ENCODE measurements at regions of chr9 and their contacts with region 1.

Region 1: GRCh38 chr9:14616188-14616982 is 76.8 kb downstream of the ZDHHC21 start:
- DNase-seq: no peak
- H3K4me3 Mint-ChIP-seq: no peak overlapping the region
- H3K27ac Mint-ChIP-seq: no peak overlapping the region
- H3K4me1 Mint-ChIP-seq: no peaks in the 10 kb centered on the region
- H3K27me3 Mint-ChIP-seq: no peaks in the 10 kb centered on the region

Region 2: GRCh38 chr9:14661421-14662059 is 45.2 kb after region 1 on chr9:
- CTCF ChIA-PET with region 1: interaction called, 5 read pairs
- POLR2A ChIA-PET with region 1: no interaction called
- intact Hi-C with region 1: loop called (anchors 5 kb)
- DNase-seq: no peak
- H3K4me3 Mint-ChIP-seq: no peak overlapping the region
- H3K27ac Mint-ChIP-seq: no peak overlapping the region
- H3K4me1 Mint-ChIP-seq: no peaks in the 10 kb centered on the region
- H3K27me3 Mint-ChIP-seq: no peaks in the 10 kb centered on the region

Region 3: GRCh38 chr9:14674630-14675029 is 58.2 kb after region 1 on chr9:
- CTCF ChIA-PET with region 1: no interaction called
- POLR2A ChIA-PET with region 1: no interaction called
- intact Hi-C with region 1: no loop called
- DNase-seq: no peak
- H3K4me3 Mint-ChIP-seq: no peak overlapping the region
- H3K27ac Mint-ChIP-seq: no peak overlapping the region
- H3K4me1 Mint-ChIP-seq: peaks cover 13% of the 10 kb centered on the region
- H3K27me3 Mint-ChIP-seq: no peaks in the 10 kb centered on the region

Region 4: GRCh38 chr9:14768405-14769229 is 152.2 kb after region 1 on chr9:
- CTCF ChIA-PET with region 1: interaction called, 50 read pairs
- POLR2A ChIA-PET with region 1: no interaction called
- intact Hi-C with region 1: loop called (anchors 1 kb)
- DNase-seq: no peak
- H3K4me3 Mint-ChIP-seq: no peak overlapping the region
- H3K27ac Mint-ChIP-seq: no peak overlapping the region
- H3K4me1 Mint-ChIP-seq: no peaks in the 10 kb centered on the region
- H3K27me3 Mint-ChIP-seq: peaks cover 12% of the 10 kb centered on the region

Region 5: DNA sequence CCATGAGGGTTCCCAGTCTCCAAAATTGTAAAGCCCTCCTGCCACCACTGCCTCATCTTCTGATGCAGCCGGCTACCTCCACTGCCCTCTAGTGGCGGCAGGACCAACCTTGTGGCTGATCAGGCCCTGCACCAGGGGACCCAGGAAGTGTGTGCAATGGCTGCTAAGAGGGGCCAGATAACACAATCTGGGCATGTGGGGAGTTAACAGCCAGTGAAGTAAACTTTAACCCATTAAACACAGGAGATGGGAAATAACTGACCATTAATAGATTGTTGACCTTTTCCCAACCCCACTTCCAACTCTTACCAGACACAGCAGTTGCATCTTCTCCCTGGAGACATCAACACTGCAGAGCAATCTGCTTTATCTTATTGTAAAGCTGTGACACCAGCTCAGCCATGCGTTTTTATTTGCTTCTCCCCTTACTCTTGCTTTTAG is 230.5 kb after region 1 on chr9:
- CTCF ChIA-PET with region 1: interaction called, 3 read pairs
- POLR2A ChIA-PET with region 1: no interaction called
- intact Hi-C with region 1: loop called (anchors 2 kb)
- DNase-seq: peak; percentile 67
- H3K4me3 Mint-ChIP-seq: no peak overlapping the region
- H3K27ac Mint-ChIP-seq: no peak overlapping the region
- H3K4me1 Mint-ChIP-seq: no peaks in the 10 kb centered on the region
- H3K27me3 Mint-ChIP-seq: peaks cover 3% of the 10 kb centered on the region

Region 6: GRCh38 chr9:14868772-14869583 is 252.6 kb after region 1 on chr9:
- CTCF ChIA-PET with region 1: no interaction called
- POLR2A ChIA-PET with region 1: no interaction called
- intact Hi-C with region 1: no loop called
- DNase-seq: no peak
- H3K4me3 Mint-ChIP-seq: no peak overlapping the region
- H3K27ac Mint-ChIP-seq: no peak overlapping the region
- H3K4me1 Mint-ChIP-seq: no peaks in the 10 kb centered on the region
- H3K27me3 Mint-ChIP-seq: peaks cover 2% of the 10 kb centered on the region

Region 7: GRCh38 chr9:15142878-15143534 is 526.6 kb after region 1 on chr9:
- CTCF ChIA-PET with region 1: no interaction called
- POLR2A ChIA-PET with region 1: no interaction called
- intact Hi-C with region 1: loop called (anchors 5 kb)
- DNase-seq: peak; percentile 12
- H3K4me3 Mint-ChIP-seq: no peak overlapping the region
- H3K27ac Mint-ChIP-seq: no peak overlapping the region
- H3K4me1 Mint-ChIP-seq: no peaks in the 10 kb centered on the region
- H3K27me3 Mint-ChIP-seq: peaks cover 1% of the 10 kb centered on the region

Measured in activated CD4-positive, alpha-beta memory T cell treated with anti-CD3 and anti-CD28 coated beads for 36 hours (primary cell).